ENCODE measurements at regions of chr16 and their contacts with region 1.

Region 1: GRCh38 chr16:11797166-11797956 is at the start of gene ZC3H7A:
- DNase-seq: peak; percentile 96
- H3K4me3 Mint-ChIP-seq: peak within 1 kb of the TSS; percentile 87
- H3K27ac Mint-ChIP-seq: peak within 1 kb of the TSS; percentile 91
- H3K4me1 Mint-ChIP-seq: peaks cover 64% of the 10 kb centered on the region
- H3K27me3 Mint-ChIP-seq: no peaks in the 10 kb centered on the region
- total RNA-seq, gene ZC3H7A: 65.1 to 75.5 TPM

Region 2: GRCh38 chr16:11742539-11743307 is 54.6 kb before region 1 on chr16 and contains the start of gene TXNDC11:
- CTCF ChIA-PET with region 1: interaction called, 38 read pairs
- POLR2A ChIA-PET with region 1: interaction called, 50 read pairs
- intact Hi-C with region 1: loop called (anchors 1 kb)
- DNase-seq: peak; percentile 99
- H3K4me3 Mint-ChIP-seq: peak within 1 kb of the TSS; percentile 89
- H3K27ac Mint-ChIP-seq: peak within 1 kb of the TSS; percentile 94
- H3K4me1 Mint-ChIP-seq: peaks cover 47% of the 10 kb centered on the region
- H3K27me3 Mint-ChIP-seq: no peaks in the 10 kb centered on the region
- total RNA-seq, gene TXNDC11: 28.4 to 29.9 TPM

Region 3: GRCh38 chr16:11768849-11769248 is 28.5 kb before region 1 on chr16:
- CTCF ChIA-PET with region 1: interaction called, 19 read pairs
- POLR2A ChIA-PET with region 1: interaction called, 4 read pairs
- intact Hi-C with region 1: no loop called
- DNase-seq: no peak
- H3K4me3 Mint-ChIP-seq: no peak overlapping the region
- H3K27ac Mint-ChIP-seq: peak overlapping the region; percentile 41
- H3K4me1 Mint-ChIP-seq: peaks cover 7% of the 10 kb centered on the region
- H3K27me3 Mint-ChIP-seq: no peaks in the 10 kb centered on the region

Region 4: DNA sequence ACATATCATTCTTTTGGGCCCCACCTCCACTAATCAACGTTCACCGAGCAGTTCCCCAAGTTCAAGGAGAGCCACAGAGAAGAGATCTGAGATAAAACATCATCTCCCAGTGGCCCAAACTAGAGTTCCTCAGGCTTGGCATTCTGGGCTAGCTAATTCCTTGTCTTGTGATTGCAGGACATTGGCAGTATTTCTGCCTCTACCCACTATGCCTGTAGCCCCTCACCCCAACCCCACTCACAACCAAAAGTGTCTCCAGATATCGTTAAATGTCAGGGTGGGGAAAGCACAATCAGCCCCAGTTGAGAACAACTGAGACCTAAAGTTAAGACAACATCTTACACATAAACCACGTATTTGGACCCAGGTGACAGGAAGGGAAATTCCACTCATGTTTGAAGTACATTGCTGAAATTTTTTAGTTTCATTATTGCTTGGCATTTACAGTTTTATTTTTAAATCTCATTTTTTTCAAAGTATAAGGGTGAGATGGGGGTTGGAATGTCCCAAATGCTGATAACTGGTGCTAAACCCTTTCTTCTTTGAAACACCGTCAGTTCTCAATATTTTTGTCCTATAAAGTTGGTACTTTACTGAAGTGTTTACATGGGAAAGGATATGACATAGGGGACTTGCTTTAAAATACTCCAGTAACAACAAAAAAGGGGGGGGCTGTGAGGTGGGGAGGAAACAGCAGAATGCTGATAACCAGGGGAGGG is 13.9 kb before region 1 on chr16:
- CTCF ChIA-PET with region 1: interaction called, 99 read pairs
- POLR2A ChIA-PET with region 1: interaction called, 34 read pairs
- intact Hi-C with region 1: loop called (anchors 1 kb)
- DNase-seq: peak; percentile 61
- H3K4me3 Mint-ChIP-seq: peak overlapping the region; percentile 78
- H3K27ac Mint-ChIP-seq: peak overlapping the region; percentile 100
- H3K4me1 Mint-ChIP-seq: peaks cover 68% of the 10 kb centered on the region
- H3K27me3 Mint-ChIP-seq: no peaks in the 10 kb centered on the region

Region 5: GRCh38 chr16:11851294-11852091 is 54.1 kb after region 1 on chr16 and contains the start of gene RSL1D1:
- CTCF ChIA-PET with region 1: interaction called, 8 read pairs
- POLR2A ChIA-PET with region 1: interaction called, 5 read pairs
- intact Hi-C with region 1: loop called (anchors 1 kb)
- DNase-seq: peak; percentile 96
- H3K4me3 Mint-ChIP-seq: peak within 1 kb of the TSS; percentile 94
- H3K27ac Mint-ChIP-seq: peak within 1 kb of the TSS; percentile 89
- H3K4me1 Mint-ChIP-seq: peaks cover 52% of the 10 kb centered on the region
- H3K27me3 Mint-ChIP-seq: no peaks in the 10 kb centered on the region
- total RNA-seq, gene RSL1D1: 287 to 296 TPM